GM12878 (cell line): ENCODE measurements at regions of chr2 and their contacts with region 1.

Region 1: GRCh38 chr2:126776692-126777619 is 121.0 kb downstream of the GYPC start:
- DNase-seq: peak; percentile 30
- ATAC-seq: peak; percentile 95
- H3K4me3 ChIP-seq: peak overlapping the region; percentile 70
- H3K27ac ChIP-seq: peak overlapping the region; percentile 25; the same call in 1 of the 2 replicates
- H3K4me1 ChIP-seq: peaks cover 6% of the 10 kb centered on the region
- H3K27me3 ChIP-seq: no peaks in the 10 kb centered on the region
- CTCF ChIP-seq: peak; percentile 96 to 99 (median 96); a peak in 5 of 6 replicates
- EP300 ChIP-seq: peak in 1 of 2 experiments; percentile 28; a peak in 1 of 4 replicates
- POLR2A ChIP-seq: no peak
- RAD21 ChIP-seq: peak; percentile 97

Region 2: GRCh38 chr2:124804014-124804940 is 1972.7 kb before region 1 on chr2:
- CTCF ChIA-PET with region 1: no interaction called
- POLR2A ChIA-PET with region 1: no interaction called
- RAD21 ChIA-PET with region 1: no interaction called
- SMC1A ChIA-PET with region 1: no interaction called
- in situ Hi-C with region 1: no loop called
- intact Hi-C with region 1: loop called (anchors 10 kb)
- DNase-seq: peak; percentile 12
- ATAC-seq: peak; percentile 81
- H3K4me3 ChIP-seq: no peak overlapping the region
- H3K27ac ChIP-seq: no peak overlapping the region
- H3K4me1 ChIP-seq: no peaks in the 10 kb centered on the region; the same call in 1 of the 2 replicates
- H3K27me3 ChIP-seq: no peaks in the 10 kb centered on the region
- CTCF ChIP-seq: peak; percentile 59 to 70 (median 67); a peak in 5 of 6 replicates
- EP300 ChIP-seq: no peak
- POLR2A ChIP-seq: no peak
- RAD21 ChIP-seq: peak; percentile 66

Region 3: DNA sequence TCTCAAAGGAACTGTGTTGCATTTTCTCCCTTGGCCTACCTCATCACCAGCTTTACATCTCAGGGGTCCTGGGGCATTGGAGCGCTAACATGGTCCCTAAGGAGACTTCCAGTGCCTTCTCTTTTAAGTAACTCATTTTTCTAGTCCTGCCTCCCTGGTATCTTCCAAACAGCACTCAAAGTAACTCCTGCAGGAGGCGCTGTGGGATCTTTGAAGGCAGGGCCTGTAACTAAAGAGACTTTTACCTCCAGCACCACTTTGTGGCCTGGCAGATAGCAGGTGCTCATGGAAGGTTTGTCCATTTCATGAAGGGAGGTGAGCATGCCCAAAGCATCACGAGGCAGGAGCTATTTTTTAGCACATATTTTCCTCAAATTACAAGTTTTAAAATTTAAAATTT is 532.0 kb before region 1 on chr2:
- CTCF ChIA-PET with region 1: interaction called, 3 read pairs
- POLR2A ChIA-PET with region 1: no interaction called
- RAD21 ChIA-PET with region 1: no interaction called
- SMC1A ChIA-PET with region 1: no interaction called
- in situ Hi-C with region 1: no loop called
- intact Hi-C with region 1: loop called (anchors 2 kb)
- DNase-seq: peak; percentile 4
- ATAC-seq: peak; percentile 61
- H3K4me3 ChIP-seq: no peak overlapping the region
- H3K27ac ChIP-seq: no peak overlapping the region
- H3K4me1 ChIP-seq: no peaks in the 10 kb centered on the region
- H3K27me3 ChIP-seq: no peaks in the 10 kb centered on the region
- CTCF ChIP-seq: peak; percentile 31 to 48 (median 47); a peak in 5 of 6 replicates
- EP300 ChIP-seq: no peak
- POLR2A ChIP-seq: no peak
- RAD21 ChIP-seq: peak; percentile 72

Region 4: GRCh38 chr2:126303113-126303512 is 473.8 kb before region 1 on chr2:
- CTCF ChIA-PET with region 1: no interaction called
- POLR2A ChIA-PET with region 1: no interaction called
- RAD21 ChIA-PET with region 1: no interaction called
- SMC1A ChIA-PET with region 1: no interaction called
- in situ Hi-C with region 1: no loop called
- intact Hi-C with region 1: no loop called
- DNase-seq: no peak
- ATAC-seq: no peak
- H3K4me3 ChIP-seq: no peak overlapping the region
- H3K27ac ChIP-seq: no peak overlapping the region
- H3K4me1 ChIP-seq: no peaks in the 10 kb centered on the region
- H3K27me3 ChIP-seq: no peaks in the 10 kb centered on the region
- CTCF ChIP-seq: no peak
- EP300 ChIP-seq: no peak
- POLR2A ChIP-seq: no peak
- RAD21 ChIP-seq: no peak

Region 5: GRCh38 chr2:126359494-126359893 is 417.5 kb before region 1 on chr2:
- CTCF ChIA-PET with region 1: interaction called, 16 read pairs
- POLR2A ChIA-PET with region 1: no interaction called
- RAD21 ChIA-PET with region 1: no interaction called
- SMC1A ChIA-PET with region 1: no interaction called
- in situ Hi-C with region 1: no loop called
- intact Hi-C with region 1: loop called (anchors 1 kb)
- DNase-seq: no peak
- ATAC-seq: peak; percentile 75
- H3K4me3 ChIP-seq: no peak overlapping the region
- H3K27ac ChIP-seq: no peak overlapping the region
- H3K4me1 ChIP-seq: no peaks in the 10 kb centered on the region
- H3K27me3 ChIP-seq: no peaks in the 10 kb centered on the region
- CTCF ChIP-seq: peak; percentile 40 to 58 (median 40)
- EP300 ChIP-seq: no peak
- POLR2A ChIP-seq: no peak
- RAD21 ChIP-seq: peak; percentile 51

Region 6: DNA sequence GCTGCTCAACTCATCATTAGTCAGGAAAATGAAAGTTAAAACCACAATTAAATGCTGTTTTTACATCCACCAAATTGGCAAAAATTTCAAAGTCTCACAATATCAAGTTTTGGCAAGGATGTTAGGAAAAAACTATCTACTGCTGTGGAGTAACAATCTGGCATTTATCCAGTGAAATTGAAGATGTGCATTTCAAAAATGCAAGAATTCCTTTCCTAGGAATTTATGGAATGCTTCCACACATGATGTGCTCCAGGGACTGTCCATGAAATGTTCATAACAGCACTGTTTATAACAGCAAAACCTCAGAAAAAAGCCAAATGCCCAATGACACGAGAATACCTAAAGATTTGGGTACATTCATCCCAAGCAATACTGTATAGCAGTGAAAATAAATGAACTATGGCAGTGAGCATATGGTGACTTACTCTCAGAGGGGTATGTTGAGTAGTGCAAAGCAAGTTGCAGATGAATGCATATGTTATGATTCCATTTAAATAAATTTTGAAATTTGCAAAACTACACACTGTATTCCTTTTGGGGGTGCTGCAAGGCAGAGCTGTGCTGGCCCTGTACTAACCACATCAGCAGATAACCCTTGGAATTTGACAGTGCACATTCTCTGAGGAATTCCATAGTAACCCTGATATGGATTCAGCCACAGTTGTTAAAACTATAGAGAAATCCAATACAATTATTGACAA is 162.3 kb before region 1 on chr2:
- CTCF ChIA-PET with region 1: interaction called, 14 read pairs
- POLR2A ChIA-PET with region 1: no interaction called
- RAD21 ChIA-PET with region 1: interaction called, 3 read pairs
- SMC1A ChIA-PET with region 1: no interaction called
- in situ Hi-C with region 1: no loop called
- intact Hi-C with region 1: no loop called
- DNase-seq: no peak
- ATAC-seq: no peak
- H3K4me3 ChIP-seq: no peak overlapping the region
- H3K27ac ChIP-seq: no peak overlapping the region
- H3K4me1 ChIP-seq: no peaks in the 10 kb centered on the region; the same call in 1 of the 2 replicates
- H3K27me3 ChIP-seq: no peaks in the 10 kb centered on the region
- CTCF ChIP-seq: no peak
- EP300 ChIP-seq: no peak
- POLR2A ChIP-seq: no peak
- RAD21 ChIP-seq: no peak

Region 7: DNA sequence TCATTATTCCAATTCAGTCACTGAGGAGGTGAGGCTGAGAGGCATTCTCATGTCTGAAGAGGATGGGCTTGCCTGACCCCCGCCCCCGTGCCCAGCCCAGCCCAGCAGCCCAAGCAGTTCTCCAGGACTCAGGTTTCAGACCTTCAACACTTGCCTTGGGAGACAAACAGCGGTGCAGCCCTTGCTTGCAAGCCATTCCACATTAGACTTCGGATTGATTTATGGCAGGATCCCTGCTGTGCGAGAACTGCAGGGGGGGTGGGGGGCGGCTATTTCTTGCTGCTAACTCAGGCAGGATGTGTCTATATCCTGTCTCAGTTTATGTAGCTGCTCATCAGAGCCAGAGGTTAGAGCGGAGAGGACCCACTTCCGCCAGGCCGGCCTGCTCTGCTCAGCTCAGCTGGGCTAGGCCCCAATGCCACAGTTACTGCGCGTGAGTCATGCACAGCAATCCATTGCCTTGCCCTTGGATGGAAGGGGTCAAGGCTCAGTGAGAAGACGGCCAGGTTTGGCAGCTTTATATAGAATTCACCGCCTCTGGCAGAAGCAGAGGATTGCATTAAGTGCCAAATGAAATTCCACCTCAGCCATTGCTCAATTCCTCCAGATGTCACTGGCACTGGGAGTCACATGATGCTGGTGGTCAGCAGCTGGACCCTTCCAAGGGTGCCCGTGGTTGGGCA is 119.2 kb before region 1 on chr2:
- CTCF ChIA-PET with region 1: no interaction called
- POLR2A ChIA-PET with region 1: no interaction called
- RAD21 ChIA-PET with region 1: no interaction called
- SMC1A ChIA-PET with region 1: interaction called, 3 read pairs
- in situ Hi-C with region 1: no loop called
- intact Hi-C with region 1: loop called (anchors 5 kb)
- DNase-seq: peak; percentile 61
- ATAC-seq: peak; percentile 80
- H3K4me3 ChIP-seq: peak overlapping the region; percentile 97
- H3K27ac ChIP-seq: peak overlapping the region; percentile 96
- H3K4me1 ChIP-seq: peaks cover 40% of the 10 kb centered on the region
- H3K27me3 ChIP-seq: no peaks in the 10 kb centered on the region
- CTCF ChIP-seq: no peak
- EP300 ChIP-seq: 0 out of 4 replicates have a peak, but pooled peaks of 1 of the 2 experiments have one; percentile 24
- POLR2A ChIP-seq: peak; percentile 81
- RAD21 ChIP-seq: no peak

Region 8: GRCh38 chr2:126809340-126809739 is 32.4 kb after region 1 on chr2:
- CTCF ChIA-PET with region 1: no interaction called
- POLR2A ChIA-PET with region 1: no interaction called
- RAD21 ChIA-PET with region 1: no interaction called
- SMC1A ChIA-PET with region 1: no interaction called
- in situ Hi-C with region 1: no loop called
- intact Hi-C with region 1: no loop called
- DNase-seq: no peak
- ATAC-seq: no peak
- H3K4me3 ChIP-seq: no peak overlapping the region
- H3K27ac ChIP-seq: no peak overlapping the region
- H3K4me1 ChIP-seq: no peaks in the 10 kb centered on the region
- H3K27me3 ChIP-seq: no peaks in the 10 kb centered on the region; a peak in 1 of 4 replicates
- CTCF ChIP-seq: no peak
- EP300 ChIP-seq: no peak
- POLR2A ChIP-seq: no peak
- RAD21 ChIP-seq: no peak

Region 9: GRCh38 chr2:126971481-126972278 is 194.7 kb after region 1 on chr2:
- CTCF ChIA-PET with region 1: interaction called, 12 read pairs
- POLR2A ChIA-PET with region 1: no interaction called
- RAD21 ChIA-PET with region 1: interaction called, 7 read pairs
- SMC1A ChIA-PET with region 1: interaction called, 7 read pairs
- in situ Hi-C with region 1: no loop called
- intact Hi-C with region 1: loop called (anchors 2 kb)
- DNase-seq: no peak
- ATAC-seq: peak; percentile 96
- H3K4me3 ChIP-seq: no peak overlapping the region
- H3K27ac ChIP-seq: no peak overlapping the region
- H3K4me1 ChIP-seq: no peaks in the 10 kb centered on the region
- H3K27me3 ChIP-seq: peaks cover 0 to 3% of the 10 kb centered on the region in 2 experiments; a peak in 3 of 4 replicates
- CTCF ChIP-seq: peak; percentile 80 to 97 (median 89)
- EP300 ChIP-seq: no peak
- POLR2A ChIP-seq: no peak
- RAD21 ChIP-seq: peak; percentile 68